Astrocyte of the cerebellum (primary cell): ENCODE measurements at regions of chr14 and their contacts with region 1.

Region 1: DNA sequence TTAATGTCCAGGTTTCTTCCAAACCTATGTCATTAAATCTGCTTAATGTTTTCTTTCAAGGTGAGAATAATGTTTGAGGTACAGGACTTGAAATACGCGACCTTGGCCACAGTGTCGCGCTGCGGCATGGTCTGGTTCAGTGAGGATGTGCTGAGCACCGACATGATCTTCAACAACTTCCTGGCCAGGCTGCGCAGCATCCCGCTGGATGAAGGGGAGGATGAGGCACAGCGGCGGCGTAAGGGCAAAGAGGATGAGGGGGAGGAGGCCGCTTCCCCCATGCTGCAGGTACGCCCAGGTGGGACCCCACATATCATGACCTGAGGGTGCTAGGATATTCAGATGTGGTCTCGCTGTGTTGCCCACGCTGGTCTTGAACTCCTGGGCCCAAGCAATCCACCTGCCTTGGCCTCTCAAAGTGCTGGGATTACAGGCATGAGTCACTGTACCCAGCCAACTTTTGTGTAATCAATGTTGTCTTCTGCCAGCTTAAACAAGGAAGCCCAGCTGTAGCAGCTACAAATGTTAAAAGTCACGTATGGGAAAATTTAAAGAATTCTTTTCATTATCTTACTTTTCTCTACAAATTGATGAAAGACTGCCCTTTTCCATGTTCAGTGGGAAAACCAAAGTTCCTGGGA is 50.8 kb downstream of the DYNC1H1 start:
- DNase-seq: no peak
- H3K4me3 ChIP-seq: no peak overlapping the region
- CTCF ChIP-seq: no peak

Region 2: GRCh38 chr14:101977311-101978071 is 37.7 kb before region 1 on chr14:
- in situ Hi-C with region 1: loop called (anchors 5 kb)
- DNase-seq: no peak
- H3K4me3 ChIP-seq: no peak overlapping the region
- CTCF ChIP-seq: no peak

Region 3: DNA sequence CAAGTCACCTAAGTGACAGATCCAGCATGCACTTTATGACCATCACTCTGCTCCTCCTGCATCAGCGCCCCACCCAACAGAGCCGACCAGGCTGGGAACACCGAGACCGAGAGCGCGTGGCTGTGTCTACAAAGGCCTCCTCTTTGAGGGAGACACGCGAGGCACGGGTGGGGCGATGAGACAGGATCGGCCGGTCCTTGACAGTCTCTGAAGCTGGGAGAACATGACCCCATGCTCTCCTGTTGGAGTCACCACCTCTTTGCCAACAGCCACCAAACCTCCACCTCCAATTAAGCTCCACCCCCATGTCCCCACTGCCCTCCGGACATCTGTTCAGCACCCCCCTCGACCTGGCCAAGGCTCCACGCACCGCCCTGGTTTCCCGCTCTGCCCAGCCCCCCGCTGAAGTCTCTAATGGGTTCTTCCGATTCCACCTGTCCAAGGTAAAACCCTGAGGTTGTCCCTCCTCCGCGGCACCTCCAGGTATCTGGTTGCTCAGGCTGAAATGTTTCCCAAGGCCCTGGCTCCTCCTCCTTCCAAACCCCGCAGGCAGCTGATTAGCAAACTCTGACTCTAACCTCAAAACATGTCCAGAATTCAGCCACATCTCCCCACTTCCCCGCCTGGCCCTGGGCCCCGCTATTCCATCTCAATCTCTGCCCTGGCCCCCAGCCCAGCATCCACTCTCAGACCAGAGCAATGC is 40.2 kb after region 1 on chr14:
- in situ Hi-C with region 1: no loop called
- DNase-seq: peak; percentile 76
- H3K4me3 ChIP-seq: no peak overlapping the region
- CTCF ChIP-seq: no peak